ENCODE measurements at regions of chr6 and their contacts with region 1.

Region 1: GRCh38 chr6:158072083-158072721 is 90.5 kb downstream of the SYNJ2 start:
- H3K4me3 Mint-ChIP-seq: no peak overlapping the region
- H3K27ac Mint-ChIP-seq: peak overlapping the region; percentile 72
- H3K4me1 Mint-ChIP-seq: peaks cover 26% of the 10 kb centered on the region
- H3K27me3 Mint-ChIP-seq: no peaks in the 10 kb centered on the region

Region 2: GRCh38 chr6:157518397-157519250 is 553.6 kb before region 1 on chr6:
- intact Hi-C with region 1: no loop called
- H3K4me3 Mint-ChIP-seq: no peak overlapping the region
- H3K27ac Mint-ChIP-seq: no peak overlapping the region
- H3K4me1 Mint-ChIP-seq: peaks cover 29% of the 10 kb centered on the region
- H3K27me3 Mint-ChIP-seq: no peaks in the 10 kb centered on the region

Region 3: GRCh38 chr6:157830354-157831017 is 241.7 kb before region 1 on chr6:
- intact Hi-C with region 1: no loop called
- H3K4me3 Mint-ChIP-seq: no peak overlapping the region
- H3K27ac Mint-ChIP-seq: no peak overlapping the region
- H3K4me1 Mint-ChIP-seq: peaks cover 47% of the 10 kb centered on the region
- H3K27me3 Mint-ChIP-seq: no peaks in the 10 kb centered on the region

Region 4: GRCh38 chr6:157928428-157928827 is 143.8 kb before region 1 on chr6:
- intact Hi-C with region 1: loop called (anchors 2 kb)
- H3K4me3 Mint-ChIP-seq: no peak overlapping the region
- H3K27ac Mint-ChIP-seq: no peak overlapping the region
- H3K4me1 Mint-ChIP-seq: peaks cover 12% of the 10 kb centered on the region
- H3K27me3 Mint-ChIP-seq: no peaks in the 10 kb centered on the region

Region 5: DNA sequence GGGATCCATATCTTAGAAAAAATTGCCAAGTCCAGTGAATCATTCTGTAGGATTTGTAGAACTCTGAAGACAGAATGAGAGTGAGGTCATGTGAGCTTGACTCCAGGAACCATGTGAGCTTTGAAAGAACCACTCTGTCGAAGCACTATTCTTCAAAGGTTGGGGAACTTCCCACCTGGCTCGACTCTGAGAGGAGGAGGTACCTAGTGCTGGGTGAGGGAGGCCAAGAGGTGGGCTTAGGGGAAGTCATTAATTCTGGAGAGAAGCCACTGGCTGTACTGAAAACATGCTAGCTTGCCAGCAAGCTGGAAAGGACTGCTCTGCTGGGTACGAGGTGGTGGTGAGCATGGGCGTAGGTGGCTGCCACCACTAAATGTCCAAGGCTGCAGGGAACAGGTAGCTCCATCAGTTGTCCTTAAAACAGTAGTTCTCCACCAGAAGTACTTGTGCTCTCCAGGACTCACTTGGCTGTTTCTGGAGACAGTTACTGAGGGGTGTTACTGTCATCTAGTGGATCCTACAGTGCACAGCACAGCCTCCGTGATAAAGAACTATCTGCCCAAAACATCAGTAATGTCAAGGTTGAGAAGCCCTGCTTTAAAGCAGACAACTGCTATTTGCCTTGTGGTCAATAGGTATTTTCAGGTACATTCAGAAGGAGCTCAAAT is 125.2 kb before region 1 on chr6:
- intact Hi-C with region 1: loop called (anchors 5 kb)
- H3K4me3 Mint-ChIP-seq: no peak overlapping the region
- H3K27ac Mint-ChIP-seq: no peak overlapping the region
- H3K4me1 Mint-ChIP-seq: no peaks in the 10 kb centered on the region
- H3K27me3 Mint-ChIP-seq: peaks cover 7% of the 10 kb centered on the region

Measured in dendritic cell treated with granulocyte-macrophage colony-stimulating factor and Interleukin-4, amounts not matched to agents 40 ng/mL and 50 ng/mL, for 4 days (primary cell).